MCF 10A (cell line): ENCODE measurements at regions of chr12 and their contacts with region 1.

Region 1: DNA sequence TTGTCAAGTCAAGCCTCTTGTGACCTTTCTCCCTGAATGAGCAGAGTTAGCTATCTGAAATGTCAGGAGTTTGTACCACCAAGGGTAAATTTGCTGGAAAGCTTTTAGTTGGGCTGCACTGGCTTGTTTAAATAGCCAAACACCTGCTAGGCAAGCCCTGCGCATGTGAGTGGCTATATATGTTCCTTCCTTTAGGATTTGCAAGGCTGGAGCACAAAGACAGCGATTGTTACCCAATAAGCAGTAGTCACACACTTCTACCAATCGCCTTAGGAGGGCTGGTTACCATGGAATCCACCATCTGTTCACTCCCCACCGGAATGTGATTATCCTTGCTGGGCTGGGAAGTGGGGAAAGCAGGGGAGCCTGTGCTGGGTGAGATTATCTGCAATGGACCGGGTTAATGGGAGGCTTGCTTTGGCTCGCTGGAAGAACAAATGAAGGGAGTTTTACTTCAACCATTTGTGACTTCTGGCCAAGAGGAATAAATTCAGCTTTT is 102.5 kb downstream of the FGD4 start:
- DNase-seq: peak; percentile 63
- H3K4me3 Mint-ChIP-seq: peak overlapping the region; percentile 52
- H3K27ac Mint-ChIP-seq: peak overlapping the region; percentile 77
- H3K4me1 Mint-ChIP-seq: peaks cover 32% of the 10 kb centered on the region
- H3K27me3 Mint-ChIP-seq: no peaks in the 10 kb centered on the region
- CTCF ChIP-seq: no peak

Region 2: GRCh38 chr12:32488132-32488531 is 13.8 kb before region 1 on chr12:
- CTCF ChIA-PET with region 1: interaction called, 5 read pairs
- POLR2A ChIA-PET with region 1: interaction called, 16 read pairs
- intact Hi-C with region 1: no loop called
- DNase-seq: no peak
- H3K4me3 Mint-ChIP-seq: no peak overlapping the region
- H3K27ac Mint-ChIP-seq: no peak overlapping the region
- H3K4me1 Mint-ChIP-seq: peaks cover 15% of the 10 kb centered on the region
- H3K27me3 Mint-ChIP-seq: no peaks in the 10 kb centered on the region
- CTCF ChIP-seq: no peak

Region 3: DNA sequence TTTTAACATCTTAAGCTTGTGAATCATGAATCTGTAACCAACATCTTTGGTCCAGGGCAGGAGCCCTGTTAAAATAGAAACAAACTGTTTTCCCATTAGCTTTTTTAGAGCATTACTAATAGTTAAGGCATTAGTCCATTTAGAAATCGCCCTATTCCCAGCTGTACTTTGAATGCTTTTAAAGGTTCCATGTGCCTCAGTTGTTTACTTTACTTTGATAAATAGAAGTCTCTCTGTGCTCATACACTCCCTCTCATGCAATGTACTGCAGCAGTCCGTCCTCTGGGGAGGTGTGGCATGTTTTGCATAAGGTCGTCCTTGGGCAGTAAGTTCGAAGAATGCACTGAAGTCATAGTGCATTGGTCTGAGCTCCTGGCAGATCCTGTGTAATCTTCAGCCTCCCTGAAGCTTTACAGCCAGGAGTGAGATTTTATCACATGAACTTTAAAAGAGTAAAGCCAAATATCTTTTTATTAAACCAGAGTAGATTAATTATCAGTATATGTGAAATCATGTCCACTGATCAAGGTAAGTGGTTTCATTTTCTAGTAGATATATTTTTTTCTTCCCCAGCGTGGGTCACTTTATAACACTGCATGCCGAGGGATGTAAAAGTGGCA is 32.2 kb after region 1 on chr12:
- CTCF ChIA-PET with region 1: no interaction called
- POLR2A ChIA-PET with region 1: interaction called, 19 read pairs
- intact Hi-C with region 1: no loop called
- DNase-seq: peak; percentile 76
- H3K4me3 Mint-ChIP-seq: peak overlapping the region; percentile 65
- H3K27ac Mint-ChIP-seq: peak overlapping the region; percentile 63
- H3K4me1 Mint-ChIP-seq: peaks cover 43% of the 10 kb centered on the region
- H3K27me3 Mint-ChIP-seq: no peaks in the 10 kb centered on the region
- CTCF ChIP-seq: no peak